ENCODE measurements at regions of chr14 and their contacts with region 1.

Region 1: GRCh38 chr14:72420725-72421474 is 473.0 kb downstream of the DPF3 start:
- DNase-seq: peak; percentile 53
- ATAC-seq: peak; percentile 77
- H3K4me3 ChIP-seq: no peak overlapping the region
- H3K27ac ChIP-seq: no peak overlapping the region
- H3K4me1 ChIP-seq: peaks cover 0 to 11% of the 10 kb centered on the region in 2 experiments; a peak in 2 of 4 replicates
- H3K27me3 ChIP-seq: no peaks in the 10 kb centered on the region
- CTCF ChIP-seq: peak; percentile 76 to 99 (median 95)
- POLR2A ChIP-seq: no peak
- RAD21 ChIP-seq: peak; percentile 92

Region 2: DNA sequence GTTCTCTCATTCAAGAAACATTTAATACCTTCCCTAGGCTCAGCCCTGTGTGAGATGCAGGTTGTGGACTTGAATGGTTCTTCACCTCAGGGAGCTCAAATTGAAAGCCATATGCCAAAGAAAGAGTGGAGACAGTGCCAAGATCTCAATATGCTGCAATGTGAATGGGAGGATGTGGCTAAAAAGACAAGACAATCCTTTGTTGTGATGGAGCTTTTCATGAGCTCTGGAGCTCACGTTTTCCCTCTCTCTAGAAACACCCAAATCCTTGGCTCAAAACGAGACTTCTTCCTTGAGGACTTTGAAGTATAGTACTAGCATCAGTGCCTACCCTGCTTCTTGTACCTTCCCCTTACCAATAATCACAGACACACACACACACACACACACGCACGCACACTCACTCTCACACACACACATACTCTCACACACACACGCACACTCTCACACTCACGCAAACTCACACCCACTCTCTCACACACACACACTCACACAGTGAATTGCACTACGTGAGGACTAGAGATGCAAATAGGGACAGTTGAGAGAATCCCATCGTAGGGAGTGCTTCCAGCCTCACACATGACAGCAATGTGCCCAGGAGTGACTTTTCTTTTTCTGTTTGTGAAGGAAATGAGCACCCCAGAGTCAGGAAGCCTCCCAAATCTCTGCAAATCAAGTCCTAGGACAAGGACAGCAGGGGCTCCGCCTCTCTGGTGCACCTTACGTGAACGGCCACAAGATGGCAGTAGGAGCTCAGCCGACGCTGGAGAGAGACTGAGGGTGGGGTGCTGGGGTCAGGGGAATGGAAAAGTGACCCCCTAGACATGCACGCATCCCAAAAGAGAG is 1282.2 kb before region 1 on chr14:
- CTCF ChIA-PET with region 1: no interaction called
- POLR2A ChIA-PET with region 1: no interaction called
- RAD21 ChIA-PET with region 1: no interaction called
- intact Hi-C with region 1: loop called (anchors 5 kb)
- DNase-seq: peak; percentile 21
- ATAC-seq: peak; percentile 92
- H3K4me3 ChIP-seq: no peak overlapping the region
- H3K27ac ChIP-seq: no peak overlapping the region
- H3K4me1 ChIP-seq: peaks cover 3 to 10% of the 10 kb centered on the region in 2 experiments; a peak in 3 of 4 replicates
- H3K27me3 ChIP-seq: no peaks in the 10 kb centered on the region
- CTCF ChIP-seq: peak; percentile 75 to 96 (median 91)
- POLR2A ChIP-seq: no peak
- RAD21 ChIP-seq: peak; percentile 97

Region 3: DNA sequence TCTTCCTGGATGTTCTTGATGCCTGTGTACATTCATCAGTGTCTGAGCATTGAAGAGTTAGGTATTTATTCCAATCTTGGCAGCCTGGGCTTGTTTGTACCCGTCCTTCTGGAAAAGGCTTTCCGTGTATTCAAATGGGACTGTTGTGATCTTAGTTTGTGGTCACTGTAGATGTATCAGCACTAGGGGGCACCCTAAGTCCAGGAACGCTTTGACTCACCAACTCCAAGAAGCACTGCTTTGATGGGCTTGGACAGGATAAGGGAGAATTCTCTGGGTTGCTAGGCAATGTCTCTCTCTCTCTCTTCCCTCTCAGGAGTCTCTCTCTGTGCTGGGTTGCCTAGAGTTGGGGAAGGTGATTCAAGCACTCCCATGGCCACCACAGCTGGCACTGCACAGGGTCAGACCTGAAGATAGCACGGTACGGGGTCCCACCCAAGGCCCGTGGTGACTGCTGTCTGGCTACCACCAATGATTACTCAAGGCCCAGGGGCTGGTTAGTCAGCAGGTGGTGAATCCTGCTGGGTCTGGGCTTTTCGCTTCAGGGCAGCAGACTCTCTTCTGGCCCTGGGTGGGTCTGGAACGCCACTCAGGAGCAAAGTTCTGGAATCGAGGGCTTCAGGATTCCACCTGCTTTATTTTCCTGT is 699.8 kb before region 1 on chr14:
- CTCF ChIA-PET with region 1: interaction called, 7 read pairs
- POLR2A ChIA-PET with region 1: no interaction called
- RAD21 ChIA-PET with region 1: no interaction called
- intact Hi-C with region 1: loop called (anchors 1 kb)
- DNase-seq: peak; percentile 57
- ATAC-seq: peak; percentile 94
- H3K4me3 ChIP-seq: no peak overlapping the region
- H3K27ac ChIP-seq: no peak overlapping the region
- H3K4me1 ChIP-seq: no peaks in the 10 kb centered on the region
- H3K27me3 ChIP-seq: no peaks in the 10 kb centered on the region
- CTCF ChIP-seq: peak; percentile 48 to 80 (median 79); a peak in 5 of 6 replicates
- POLR2A ChIP-seq: no peak
- RAD21 ChIP-seq: peak; percentile 81

Region 4: GRCh38 chr14:71932220-71932981 is 488.5 kb before region 1 on chr14 and contains the start of gene RGS6:
- CTCF ChIA-PET with region 1: no interaction called
- POLR2A ChIA-PET with region 1: no interaction called
- RAD21 ChIA-PET with region 1: no interaction called
- intact Hi-C with region 1: loop called (anchors 5 kb)
- DNase-seq: peak; percentile 43
- ATAC-seq: peak; percentile 97
- H3K4me3 ChIP-seq: peak within 1 kb of the TSS; percentile 23 to 41
- H3K27ac ChIP-seq: no peak within 1 kb of the TSS
- H3K4me1 ChIP-seq: peaks cover 5 to 14% of the 10 kb centered on the region in 2 experiments
- H3K27me3 ChIP-seq: no peaks in the 10 kb centered on the region
- CTCF ChIP-seq: peak in 1 of 3 experiments; percentile 29; a peak in 2 of 6 replicates
- POLR2A ChIP-seq: no peak
- RAD21 ChIP-seq: no peak
- total RNA-seq, gene RGS6: 4.7 TPM

Region 5: DNA sequence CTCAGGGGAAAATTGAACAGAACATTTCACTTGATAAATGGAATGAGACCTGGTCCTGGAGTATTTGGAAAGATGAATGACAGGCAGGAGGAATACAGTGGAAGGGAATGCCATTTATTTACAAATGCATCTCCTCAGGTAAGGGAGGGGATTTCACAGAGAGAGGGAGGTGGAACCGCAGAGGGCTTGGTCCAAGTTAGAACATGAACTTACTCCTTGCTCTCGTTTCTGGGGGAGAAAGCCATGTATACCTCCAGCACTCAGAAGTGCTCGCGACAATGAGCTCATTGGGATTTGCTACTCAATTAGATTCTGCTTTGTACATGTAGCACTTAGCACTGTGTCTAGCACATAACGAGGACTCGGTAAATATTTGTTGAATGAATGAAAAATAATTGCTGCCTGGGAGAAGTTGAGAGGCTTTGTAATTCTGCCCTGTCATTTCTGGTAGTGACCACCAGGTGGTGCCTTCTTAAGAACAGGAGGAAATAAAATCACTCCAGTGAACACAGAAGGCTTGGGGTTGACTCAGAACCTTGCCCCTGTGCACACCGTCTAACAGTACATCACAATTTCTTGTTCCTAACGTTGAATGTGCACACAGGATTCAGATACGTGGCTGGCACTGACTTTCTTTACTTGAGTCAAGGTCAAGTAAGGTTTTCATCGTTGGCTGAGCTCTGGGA is 397.0 kb before region 1 on chr14:
- CTCF ChIA-PET with region 1: interaction called, 10 read pairs
- POLR2A ChIA-PET with region 1: no interaction called
- RAD21 ChIA-PET with region 1: no interaction called
- intact Hi-C with region 1: loop called (anchors 1 kb)
- DNase-seq: peak; percentile 65
- ATAC-seq: peak; percentile 72
- H3K4me3 ChIP-seq: peak overlapping the region; percentile 4 to 53; a peak in 3 of 4 replicates
- H3K27ac ChIP-seq: peak overlapping the region; percentile 69
- H3K4me1 ChIP-seq: peaks cover 23 to 26% of the 10 kb centered on the region in 2 experiments
- H3K27me3 ChIP-seq: no peaks in the 10 kb centered on the region
- CTCF ChIP-seq: peak; percentile 42 to 84 (median 73); a peak in 5 of 6 replicates
- POLR2A ChIP-seq: no peak
- RAD21 ChIP-seq: peak; percentile 64

Region 6: GRCh38 chr14:72104011-72104613 is 316.8 kb before region 1 on chr14:
- CTCF ChIA-PET with region 1: interaction called, 3 read pairs
- POLR2A ChIA-PET with region 1: no interaction called
- RAD21 ChIA-PET with region 1: no interaction called
- intact Hi-C with region 1: loop called (anchors 5 kb)
- DNase-seq: peak; percentile 3
- ATAC-seq: peak; percentile 87
- H3K4me3 ChIP-seq: no peak overlapping the region
- H3K27ac ChIP-seq: no peak overlapping the region
- H3K4me1 ChIP-seq: no peaks in the 10 kb centered on the region
- H3K27me3 ChIP-seq: 0 out of 2 replicates have a peak, but pooled peaks cover 7% of the 10 kb centered on the region
- CTCF ChIP-seq: peak; percentile 36 to 96 (median 94); a peak in 4 of 6 replicates
- POLR2A ChIP-seq: no peak
- RAD21 ChIP-seq: peak; percentile 39; the same call in 1 of the 2 replicates

Measured in HCT116 (cell line).